ENCODE measurements at regions of chr2 and their contacts with region 1.

Region 1: GRCh38 chr2:25376750-25377621 is 35.3 kb upstream of the DNMT3A start:
- DNase-seq: no peak
- H3K4me3 ChIP-seq: peak overlapping the region; percentile 42
- CTCF ChIP-seq: peak; percentile 89

Region 2: DNA sequence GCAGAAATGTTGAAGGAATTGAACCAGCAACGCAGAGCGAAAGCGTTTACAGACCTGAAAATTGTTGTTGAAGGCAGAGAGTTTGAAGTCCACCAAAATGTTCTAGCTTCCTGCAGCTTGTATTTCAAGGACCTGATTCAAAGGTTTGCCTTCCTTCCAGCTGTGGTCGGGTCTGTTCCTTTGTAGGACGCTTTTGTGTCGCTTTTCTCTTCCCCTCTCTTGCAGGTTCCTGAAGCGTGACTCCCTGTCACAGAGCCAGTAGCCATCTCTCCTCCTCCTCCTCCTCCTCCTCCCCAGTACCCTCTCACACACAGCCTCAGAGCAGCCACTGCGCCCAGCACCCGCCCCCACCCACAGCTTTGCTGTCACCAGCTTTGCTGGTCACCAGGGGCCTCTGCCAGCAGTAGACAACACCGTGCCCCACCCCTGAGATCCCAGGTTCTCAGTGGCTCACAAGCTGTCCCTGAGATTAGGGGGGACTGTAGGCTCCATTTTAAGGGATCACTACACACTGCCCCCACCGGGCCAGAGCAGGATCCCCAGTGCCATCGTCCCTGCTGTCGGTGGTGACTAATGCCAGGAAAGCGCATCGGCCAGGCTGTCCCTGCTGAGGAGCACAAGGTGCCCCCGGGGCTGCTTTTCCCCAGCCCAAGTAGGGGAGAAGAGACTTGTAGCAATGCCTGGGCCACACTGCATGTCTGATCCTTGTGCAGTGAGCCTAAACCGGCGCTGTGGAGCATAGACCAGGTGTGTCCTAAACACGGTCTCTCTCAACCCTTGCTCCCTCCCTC is 1692.4 kb before region 1 on chr2:
- CTCF ChIA-PET with region 1: no interaction called
- POLR2A ChIA-PET with region 1: no interaction called
- DNase-seq: no peak
- H3K4me3 ChIP-seq: no peak overlapping the region
- CTCF ChIP-seq: no peak

Region 3: GRCh38 chr2:25342372-25343186 is 34.4 kb before region 1 on chr2:
- CTCF ChIA-PET with region 1: interaction called, 26 read pairs
- POLR2A ChIA-PET with region 1: no interaction called
- DNase-seq: no peak
- H3K4me3 ChIP-seq: peak overlapping the region; percentile 64
- CTCF ChIP-seq: peak; percentile 98

Region 4: DNA sequence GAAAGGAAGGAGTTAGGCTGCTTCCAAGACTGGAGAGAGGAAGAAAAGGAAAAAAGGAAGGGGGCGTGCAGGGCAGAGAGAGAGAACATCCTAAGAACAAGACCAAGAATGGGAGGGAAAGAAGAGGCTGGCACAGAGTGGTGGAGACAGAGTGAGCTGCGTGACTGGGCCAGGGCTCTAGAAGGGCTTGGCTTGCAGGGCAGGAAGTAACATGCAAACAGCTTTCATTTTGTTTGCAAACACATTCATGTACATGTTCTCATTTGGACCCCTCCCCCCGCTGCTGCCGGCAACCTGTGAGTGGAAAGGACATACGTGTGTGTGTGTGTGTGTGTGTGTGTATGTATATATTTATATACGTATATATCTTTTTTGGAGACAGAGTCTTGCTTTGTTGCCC is 11.5 kb after region 1 on chr2:
- CTCF ChIA-PET with region 1: interaction called, 86 read pairs
- POLR2A ChIA-PET with region 1: no interaction called
- DNase-seq: no peak
- H3K4me3 ChIP-seq: no peak overlapping the region
- CTCF ChIP-seq: no peak

Region 5: GRCh38 chr2:25401307-25402026 is 24.5 kb after region 1 on chr2:
- CTCF ChIA-PET with region 1: interaction called, 12 read pairs
- POLR2A ChIA-PET with region 1: no interaction called
- DNase-seq: no peak
- H3K4me3 ChIP-seq: no peak overlapping the region
- CTCF ChIP-seq: no peak

Region 6: DNA sequence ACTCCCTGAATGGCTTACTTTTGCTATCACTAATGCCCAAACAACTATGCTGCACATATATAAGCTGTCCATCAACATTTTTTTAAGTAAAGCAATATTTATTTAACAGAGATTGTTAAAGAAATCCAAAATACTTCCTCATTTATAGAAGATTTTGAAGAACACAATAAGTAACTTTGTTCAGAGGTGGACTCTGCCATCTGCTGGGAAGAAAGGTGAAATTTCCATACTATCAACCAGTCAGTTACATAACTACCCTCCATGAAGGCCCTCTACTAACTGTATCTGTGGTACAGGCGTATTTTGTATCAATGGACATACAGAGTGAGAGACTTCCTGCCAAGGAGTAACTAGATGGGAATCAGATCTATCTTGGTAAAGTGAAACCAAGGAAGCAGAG is 190.4 kb after region 1 on chr2:
- CTCF ChIA-PET with region 1: interaction called, 18 read pairs
- POLR2A ChIA-PET with region 1: no interaction called
- DNase-seq: no peak
- H3K4me3 ChIP-seq: no peak overlapping the region
- CTCF ChIP-seq: peak; percentile 30